Gastrocnemius medialis (tissue), 4 donors: ENCODE measurements at regions of chr20 and their contacts with region 1.

Region 1: DNA sequence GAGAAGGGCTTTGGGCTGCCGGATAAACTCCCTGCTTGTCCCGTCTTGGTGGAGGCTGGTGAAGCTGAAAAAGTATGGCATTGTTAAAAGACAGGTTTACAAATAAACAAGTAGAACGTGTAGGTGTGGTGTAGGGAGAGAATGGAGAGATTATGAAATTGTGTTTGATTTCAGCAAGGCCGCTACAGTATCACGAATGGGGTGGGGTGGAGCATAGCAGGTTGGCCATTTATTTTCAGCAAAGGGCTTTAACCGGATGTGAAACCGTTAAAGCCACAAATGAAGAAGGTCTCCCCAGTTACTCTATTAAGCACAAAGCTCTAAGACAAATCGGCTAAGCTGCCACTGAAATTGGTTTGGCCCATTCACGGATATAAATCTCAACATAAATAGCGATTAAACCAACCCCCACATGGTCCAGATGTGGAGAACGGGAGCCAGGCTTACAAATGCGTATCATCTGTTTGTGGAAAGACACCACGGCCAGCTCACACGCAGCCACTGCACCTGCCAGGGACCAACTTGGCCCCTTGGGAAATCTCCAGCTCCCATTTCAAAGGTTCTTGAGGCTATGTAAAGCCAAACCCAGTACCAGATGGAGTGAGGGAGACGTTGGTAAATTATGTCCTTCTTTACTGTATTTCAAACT is 94.0 kb downstream of the ZMYND8 start:
- DNase-seq: peak; percentile 22 to 64
- ATAC-seq: peak; percentile 67 to 72
- H3K4me3 ChIP-seq: no peak overlapping the region
- H3K27ac ChIP-seq: peak overlapping the region; percentile 47 to 87 (median 72)
- H3K4me1 ChIP-seq: peaks cover 28 to 31% of the 10 kb centered on the region in 2 donors
- H3K27me3 ChIP-seq: no peaks in the 10 kb centered on the region
- CTCF ChIP-seq: no peak
- POLR2A ChIP-seq: no peak

Region 2: DNA sequence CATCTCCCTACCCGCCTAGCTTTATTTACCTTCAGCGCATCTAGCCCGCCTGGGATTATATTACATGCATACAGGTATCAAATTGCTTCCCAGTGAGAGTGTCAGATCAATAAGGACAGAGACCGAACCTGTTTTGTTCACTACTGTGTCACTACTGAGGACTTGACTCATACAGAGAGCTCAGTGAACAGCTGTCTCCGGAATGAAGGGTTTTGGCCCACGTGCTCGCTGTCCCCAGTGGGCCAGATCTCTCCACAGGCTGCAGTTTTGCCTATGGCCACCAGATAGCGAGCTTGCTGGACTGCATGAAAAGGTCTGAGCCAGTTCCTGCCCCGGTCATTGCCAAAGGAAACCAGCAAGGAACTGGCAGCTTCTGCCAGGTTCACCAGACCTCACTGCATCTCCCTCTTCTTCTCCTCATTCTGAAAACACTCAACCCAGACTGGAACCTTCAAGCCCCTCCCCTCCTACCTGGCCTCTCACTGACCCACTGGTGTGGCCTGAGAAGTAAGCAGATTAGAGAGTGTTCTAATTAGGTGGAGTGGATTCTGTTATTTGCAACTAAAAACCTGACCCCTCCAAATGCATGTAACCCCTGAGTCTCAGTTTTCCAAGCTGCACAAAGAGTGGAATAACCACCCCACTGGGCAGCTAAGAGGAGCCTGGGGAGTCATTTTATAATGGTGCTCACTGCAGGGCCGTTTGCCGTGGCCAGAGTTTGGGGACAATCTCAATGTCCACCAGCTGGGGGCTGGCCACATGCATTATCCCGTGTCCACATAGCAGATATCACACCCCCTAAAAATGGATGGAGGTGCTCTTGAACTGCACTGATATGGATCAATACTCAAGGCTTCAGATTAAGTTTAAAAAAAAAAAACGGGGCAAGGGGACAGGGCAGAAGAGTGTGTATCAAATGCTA is 56.7 kb before region 1 on chr20:
- in situ Hi-C with region 1: no loop called
- intact Hi-C with region 1: loop called (anchors 5 kb)
- DNase-seq: peak; percentile 59 to 84
- ATAC-seq: peak; percentile 91 to 93
- H3K4me3 ChIP-seq: no peak overlapping the region
- H3K27ac ChIP-seq: peak overlapping the region in 1 of 4 donors; percentile 47
- H3K4me1 ChIP-seq: peaks cover 0 to 3% of the 10 kb centered on the region in 2 donors
- H3K27me3 ChIP-seq: no peaks in the 10 kb centered on the region
- CTCF ChIP-seq: peak; percentile 62 to 74 (median 66)
- POLR2A ChIP-seq: no peak

Region 3: GRCh38 chr20:47241345-47241781 is 21.1 kb before region 1 on chr20:
- in situ Hi-C with region 1: no loop called
- intact Hi-C with region 1: no loop called
- DNase-seq: no peak
- ATAC-seq: no peak
- H3K4me3 ChIP-seq: no peak overlapping the region
- H3K27ac ChIP-seq: no peak overlapping the region
- H3K4me1 ChIP-seq: no peaks in the 10 kb centered on the region
- H3K27me3 ChIP-seq: no peaks in the 10 kb centered on the region
- CTCF ChIP-seq: no peak
- POLR2A ChIP-seq: no peak